ENCODE measurements at regions of chr20 and their contacts with region 1.

Region 1: DNA sequence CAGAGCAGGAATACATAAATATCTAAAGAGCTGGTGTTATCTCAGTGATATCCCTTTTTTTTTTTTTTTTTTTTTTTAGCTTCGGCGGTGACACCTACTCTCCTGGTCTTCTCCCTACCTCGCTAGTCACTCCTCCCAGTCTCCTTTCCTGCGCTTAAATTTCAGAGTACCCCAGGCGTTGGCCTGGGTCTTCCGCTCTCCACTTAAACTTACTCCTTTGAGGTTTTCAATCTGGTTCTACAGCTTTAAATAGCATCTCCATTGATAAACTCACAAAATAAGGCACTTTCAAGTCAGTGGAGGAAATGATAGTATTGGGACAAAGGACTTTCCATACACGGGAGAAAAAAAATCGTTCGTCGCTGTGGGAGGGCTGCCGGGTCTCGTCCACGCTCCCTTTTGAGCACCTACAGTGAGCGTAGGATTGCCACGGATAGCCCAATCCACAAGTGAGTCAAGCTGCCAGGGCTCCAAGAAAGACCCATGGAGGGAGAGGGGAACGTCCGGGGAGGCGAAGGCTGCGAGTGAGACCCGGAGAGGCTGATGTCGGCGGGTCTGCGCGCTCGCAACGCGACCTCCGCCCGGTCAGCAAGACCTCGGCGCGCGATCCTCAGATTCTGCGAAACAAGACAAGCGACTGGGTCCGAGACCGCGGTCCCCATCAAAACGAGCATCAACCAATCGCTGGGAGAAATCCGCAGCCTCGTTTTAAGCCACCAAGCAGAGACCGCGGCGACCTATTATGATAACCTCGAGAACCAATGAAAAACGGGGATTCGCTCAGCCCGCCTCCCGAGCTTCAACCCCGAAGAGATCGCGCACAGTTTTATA is 672 bp upstream of the SRSF6 start:
- DNase-seq: peak; percentile 87 to 98 (median 93)

Region 2: GRCh38 chr20:43514062-43514999 is 57.3 kb after region 1 on chr20:
- intact Hi-C with region 1: loop called (anchors 5 kb)
- DNase-seq: peak; percentile 90 to 99 (median 94)

Measured in posterior cingulate gyrus (tissue), 11 donors.